ENCODE measurements at regions of chr18 and their contacts with region 1.

Region 1: GRCh38 chr18:57561728-57562423 is 24.6 kb downstream of the FECH start:
- DNase-seq: no peak
- H3K4me3 Mint-ChIP-seq: no peak overlapping the region
- H3K27ac Mint-ChIP-seq: no peak overlapping the region
- H3K4me1 Mint-ChIP-seq: no peaks in the 10 kb centered on the region
- H3K27me3 Mint-ChIP-seq: no peaks in the 10 kb centered on the region

Region 2: GRCh38 chr18:57801761-57802212 is 239.9 kb after region 1 on chr18:
- intact Hi-C with region 1: no loop called
- DNase-seq: no peak
- H3K4me3 Mint-ChIP-seq: peak overlapping the region; percentile 37
- H3K27ac Mint-ChIP-seq: no peak overlapping the region
- H3K4me1 Mint-ChIP-seq: peaks cover 3% of the 10 kb centered on the region
- H3K27me3 Mint-ChIP-seq: peaks cover 51% of the 10 kb centered on the region

Region 3: DNA sequence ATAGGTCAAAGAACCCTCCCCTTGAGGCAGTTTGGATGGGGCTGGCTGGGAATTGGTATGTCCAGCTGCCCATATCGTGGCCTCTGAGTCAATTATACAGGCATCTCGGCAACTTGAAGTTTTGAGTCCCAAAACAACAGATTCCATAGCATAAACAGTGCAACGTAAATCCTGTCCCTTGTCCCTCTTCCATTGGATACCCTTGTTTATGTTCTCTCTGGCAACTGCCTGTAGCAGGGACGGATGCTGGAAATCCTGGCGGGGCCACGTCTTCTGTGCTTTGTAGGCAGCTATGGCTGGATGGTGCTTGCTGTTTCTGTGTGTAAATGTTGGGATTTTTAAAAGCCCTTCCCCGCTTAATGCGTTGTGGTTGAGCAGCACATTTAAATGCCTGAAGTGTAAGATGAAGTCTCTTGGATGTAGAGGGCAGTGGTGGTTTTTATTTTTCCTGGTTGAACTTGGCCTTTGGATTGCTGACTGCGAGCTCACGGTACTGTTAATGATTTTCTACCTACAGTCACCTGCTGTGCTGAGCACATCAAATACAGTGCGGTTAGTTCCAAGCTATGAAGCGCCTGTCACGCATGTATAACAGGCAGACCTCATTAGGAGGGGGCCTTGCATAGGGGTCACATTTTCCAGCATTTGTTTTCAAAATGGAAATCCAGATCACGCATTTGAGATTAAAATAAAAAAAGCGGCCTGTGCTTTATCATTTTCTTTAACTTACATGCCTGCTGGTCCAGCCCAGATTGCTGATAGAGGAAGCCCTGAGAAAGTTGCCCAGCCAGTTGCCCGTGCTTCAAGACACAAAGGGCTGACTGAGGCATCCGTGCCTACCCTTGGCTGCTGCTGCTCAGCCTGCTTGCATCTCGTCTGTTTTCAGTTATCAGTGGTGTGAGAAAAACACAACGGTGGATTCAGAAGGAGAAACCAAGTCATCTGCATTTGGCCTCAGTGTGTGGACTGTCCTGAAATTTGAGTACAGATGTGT is 566.8 kb after region 1 on chr18:
- intact Hi-C with region 1: loop called (anchors 10 kb)
- DNase-seq: no peak
- H3K4me3 Mint-ChIP-seq: no peak overlapping the region
- H3K27ac Mint-ChIP-seq: no peak overlapping the region
- H3K4me1 Mint-ChIP-seq: no peaks in the 10 kb centered on the region
- H3K27me3 Mint-ChIP-seq: no peaks in the 10 kb centered on the region

Measured in activated T-helper 2 cell treated with anti-CD3 and anti-CD28 coated beads, Interferon-gamma antibody, Interleukin-2, Interleukin-4, amounts not matched to agents 10 μg/mL and 5 μg/mL and 100 μg/mL, durations not matched to agents 14 hours and 24 hours and 36 hours (primary cell).